ENCODE measurements at regions of chr3 and their contacts with region 1.

Region 1: GRCh38 chr3:3179407-3180094 is at the start of gene CRBN:
- DNase-seq: peak; percentile 85 to 92 (median 86)
- H3K4me3 ChIP-seq: peak within 1 kb of the TSS; percentile 68
- H3K4me3 Mint-ChIP-seq: peak within 1 kb of the TSS; percentile 89 to 96 (median 93)
- H3K27ac ChIP-seq: peak within 1 kb of the TSS; percentile 88
- H3K27ac Mint-ChIP-seq: peak within 1 kb of the TSS; percentile 86 to 98 (median 94)
- H3K4me1 ChIP-seq: peaks cover 48% of the 10 kb centered on the region
- H3K4me1 Mint-ChIP-seq: peaks cover 46 to 52% (median 50%) of the 10 kb centered on the region in 3 donors
- H3K27me3 ChIP-seq: no peaks in the 10 kb centered on the region
- H3K27me3 Mint-ChIP-seq: peaks cover 0 to 4% of the 10 kb centered on the region in 2 donors
- total RNA-seq, gene CRBN: 41.7 to 47.8 TPM

Region 2: DNA sequence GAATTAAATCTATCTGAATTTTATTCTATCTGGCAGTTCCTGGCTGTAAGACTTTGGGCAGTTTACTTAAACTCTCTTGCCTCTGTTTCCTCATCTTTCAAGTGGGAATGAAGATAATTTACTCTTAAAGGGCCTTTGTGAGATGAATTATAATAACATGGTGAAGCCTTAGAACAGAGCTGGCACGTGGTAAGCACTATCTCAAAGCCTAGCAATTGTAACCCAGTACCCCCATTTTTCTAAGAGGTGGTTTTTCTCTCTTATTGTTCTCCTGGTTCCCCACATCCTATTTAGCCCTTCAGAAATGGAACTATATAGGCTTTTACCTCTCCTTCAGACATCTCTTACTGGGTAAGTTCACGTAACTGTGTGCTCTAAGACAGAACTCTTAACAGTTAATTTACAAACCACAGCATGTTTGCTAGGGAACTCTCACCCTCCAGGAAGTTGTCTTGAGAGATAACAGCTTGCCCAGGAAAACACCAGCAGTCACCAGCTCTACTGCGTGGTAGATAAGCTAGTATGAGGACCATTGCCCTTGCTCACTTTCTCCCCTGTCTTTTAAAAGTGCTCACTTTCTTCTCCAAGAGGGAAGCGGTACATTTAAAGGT is 12.2 kb after region 1 on chr3:
- CTCF ChIA-PET with region 1: interaction called, 10 read pairs
- POLR2A ChIA-PET with region 1: no interaction called
- DNase-seq: peak in 2 of 5 donors; percentile 30 to 40
- H3K4me3 ChIP-seq: peak overlapping the region; percentile 17
- H3K4me3 Mint-ChIP-seq: peak overlapping the region; percentile 42 to 80 (median 72)
- H3K27ac ChIP-seq: no peak overlapping the region
- H3K27ac Mint-ChIP-seq: peak overlapping the region; percentile 79 to 97 (median 90)
- H3K4me1 ChIP-seq: peaks cover 37% of the 10 kb centered on the region
- H3K4me1 Mint-ChIP-seq: peaks cover 38 to 53% (median 42%) of the 10 kb centered on the region in 3 donors
- H3K27me3 ChIP-seq: no peaks in the 10 kb centered on the region
- H3K27me3 Mint-ChIP-seq: no peaks in the 10 kb centered on the region

Region 3: GRCh38 chr3:3296979-3297381 is 117.4 kb after region 1 on chr3:
- CTCF ChIA-PET with region 1: no interaction called
- POLR2A ChIA-PET with region 1: no interaction called
- DNase-seq: peak in 1 of 5 donors; percentile 42
- H3K4me3 ChIP-seq: no peak overlapping the region
- H3K4me3 Mint-ChIP-seq: peak overlapping the region in 5 of 7 donors; percentile 19 to 41 (median 33)
- H3K27ac ChIP-seq: no peak overlapping the region
- H3K27ac Mint-ChIP-seq: no peak overlapping the region
- H3K4me1 ChIP-seq: peaks cover 7% of the 10 kb centered on the region
- H3K4me1 Mint-ChIP-seq: peaks cover 7 to 8% (median 7%) of the 10 kb centered on the region in 3 donors
- H3K27me3 ChIP-seq: no peaks in the 10 kb centered on the region
- H3K27me3 Mint-ChIP-seq: peaks cover 3 to 17% of the 10 kb centered on the region in 2 donors

Region 4: GRCh38 chr3:3392946-3393345 is 213.4 kb after region 1 on chr3:
- CTCF ChIA-PET with region 1: no interaction called
- POLR2A ChIA-PET with region 1: no interaction called
- DNase-seq: no peak
- H3K4me3 ChIP-seq: no peak overlapping the region
- H3K4me3 Mint-ChIP-seq: no peak overlapping the region
- H3K27ac ChIP-seq: no peak overlapping the region
- H3K27ac Mint-ChIP-seq: no peak overlapping the region
- H3K4me1 ChIP-seq: no peaks in the 10 kb centered on the region
- H3K4me1 Mint-ChIP-seq: no peaks in the 10 kb centered on the region
- H3K27me3 ChIP-seq: no peaks in the 10 kb centered on the region
- H3K27me3 Mint-ChIP-seq: no peaks in the 10 kb centered on the region

Measured in CD8-positive, alpha-beta memory T cell (primary cell).